ENCODE measurements at regions of chr1 and their contacts with region 1.

Region 1: GRCh38 chr1:30801771-30802198 is 44.2 kb upstream of the LAPTM5 start:
- DNase-seq: peak; percentile 65 to 88 (median 80)
- ATAC-seq: peak; percentile 87
- H3K4me3 ChIP-seq: no peak overlapping the region
- H3K4me3 Mint-ChIP-seq: no peak overlapping the region
- H3K27ac ChIP-seq: no peak overlapping the region
- H3K27ac Mint-ChIP-seq: no peak overlapping the region
- H3K4me1 ChIP-seq: no peaks in the 10 kb centered on the region
- H3K4me1 Mint-ChIP-seq: peaks cover 6% of the 10 kb centered on the region
- H3K27me3 ChIP-seq: peaks cover 0 to 3% of the 10 kb centered on the region in 2 experiments
- H3K27me3 Mint-ChIP-seq: peaks cover 31% of the 10 kb centered on the region
- CTCF ChIP-seq: peak; percentile 90

Region 2: DNA sequence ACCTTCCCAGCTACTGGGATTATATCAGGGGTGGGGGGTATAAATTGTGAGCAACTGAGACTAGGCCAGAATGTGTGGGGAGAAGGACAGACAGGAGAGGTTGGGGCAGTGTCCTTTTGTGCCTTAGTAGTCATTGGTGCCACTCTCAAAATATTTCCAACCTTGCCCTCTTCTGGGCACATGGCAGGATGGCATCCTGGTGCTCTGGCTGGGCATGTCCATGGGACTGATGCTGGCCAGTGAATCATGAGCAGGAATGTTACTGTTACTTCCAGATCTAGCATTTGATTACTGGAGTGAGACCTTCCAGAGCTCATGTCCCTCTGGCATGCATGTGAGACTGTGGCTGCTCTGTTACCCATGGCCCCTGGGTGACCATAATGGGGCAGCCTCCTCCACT is 229.6 kb before region 1 on chr1:
- CTCF ChIA-PET with region 1: no interaction called
- POLR2A ChIA-PET with region 1: no interaction called
- intact Hi-C with region 1: no loop called
- DNase-seq: no peak
- ATAC-seq: no peak
- H3K4me3 ChIP-seq: no peak overlapping the region
- H3K4me3 Mint-ChIP-seq: no peak overlapping the region
- H3K27ac ChIP-seq: no peak overlapping the region
- H3K27ac Mint-ChIP-seq: no peak overlapping the region
- H3K4me1 ChIP-seq: no peaks in the 10 kb centered on the region
- H3K4me1 Mint-ChIP-seq: no peaks in the 10 kb centered on the region
- H3K27me3 ChIP-seq: no peaks in the 10 kb centered on the region
- H3K27me3 Mint-ChIP-seq: peaks cover 32% of the 10 kb centered on the region
- CTCF ChIP-seq: no peak

Region 3: GRCh38 chr1:30779294-30780071 is 22.3 kb before region 1 on chr1:
- CTCF ChIA-PET with region 1: interaction called, 33 read pairs
- POLR2A ChIA-PET with region 1: no interaction called
- intact Hi-C with region 1: no loop called
- DNase-seq: peak; percentile 84 to 99 (median 90)
- ATAC-seq: peak; percentile 89
- H3K4me3 ChIP-seq: peak overlapping the region in 1 of 2 experiments; percentile 8
- H3K4me3 Mint-ChIP-seq: no peak overlapping the region
- H3K27ac ChIP-seq: no peak overlapping the region
- H3K27ac Mint-ChIP-seq: no peak overlapping the region
- H3K4me1 ChIP-seq: peaks cover 16% of the 10 kb centered on the region
- H3K4me1 Mint-ChIP-seq: peaks cover 17% of the 10 kb centered on the region
- H3K27me3 ChIP-seq: no peaks in the 10 kb centered on the region
- H3K27me3 Mint-ChIP-seq: no peaks in the 10 kb centered on the region
- CTCF ChIP-seq: peak; percentile 83

Region 4: GRCh38 chr1:30847358-30847972 is 45.7 kb after region 1 on chr1:
- CTCF ChIA-PET with region 1: no interaction called
- POLR2A ChIA-PET with region 1: no interaction called
- intact Hi-C with region 1: no loop called
- DNase-seq: no peak
- ATAC-seq: no peak
- H3K4me3 ChIP-seq: no peak overlapping the region
- H3K4me3 Mint-ChIP-seq: no peak overlapping the region
- H3K27ac ChIP-seq: no peak overlapping the region
- H3K27ac Mint-ChIP-seq: no peak overlapping the region
- H3K4me1 ChIP-seq: no peaks in the 10 kb centered on the region
- H3K4me1 Mint-ChIP-seq: no peaks in the 10 kb centered on the region
- H3K27me3 ChIP-seq: peaks cover 0 to 3% of the 10 kb centered on the region in 2 experiments
- H3K27me3 Mint-ChIP-seq: peaks cover 61% of the 10 kb centered on the region
- CTCF ChIP-seq: no peak

Region 5: DNA sequence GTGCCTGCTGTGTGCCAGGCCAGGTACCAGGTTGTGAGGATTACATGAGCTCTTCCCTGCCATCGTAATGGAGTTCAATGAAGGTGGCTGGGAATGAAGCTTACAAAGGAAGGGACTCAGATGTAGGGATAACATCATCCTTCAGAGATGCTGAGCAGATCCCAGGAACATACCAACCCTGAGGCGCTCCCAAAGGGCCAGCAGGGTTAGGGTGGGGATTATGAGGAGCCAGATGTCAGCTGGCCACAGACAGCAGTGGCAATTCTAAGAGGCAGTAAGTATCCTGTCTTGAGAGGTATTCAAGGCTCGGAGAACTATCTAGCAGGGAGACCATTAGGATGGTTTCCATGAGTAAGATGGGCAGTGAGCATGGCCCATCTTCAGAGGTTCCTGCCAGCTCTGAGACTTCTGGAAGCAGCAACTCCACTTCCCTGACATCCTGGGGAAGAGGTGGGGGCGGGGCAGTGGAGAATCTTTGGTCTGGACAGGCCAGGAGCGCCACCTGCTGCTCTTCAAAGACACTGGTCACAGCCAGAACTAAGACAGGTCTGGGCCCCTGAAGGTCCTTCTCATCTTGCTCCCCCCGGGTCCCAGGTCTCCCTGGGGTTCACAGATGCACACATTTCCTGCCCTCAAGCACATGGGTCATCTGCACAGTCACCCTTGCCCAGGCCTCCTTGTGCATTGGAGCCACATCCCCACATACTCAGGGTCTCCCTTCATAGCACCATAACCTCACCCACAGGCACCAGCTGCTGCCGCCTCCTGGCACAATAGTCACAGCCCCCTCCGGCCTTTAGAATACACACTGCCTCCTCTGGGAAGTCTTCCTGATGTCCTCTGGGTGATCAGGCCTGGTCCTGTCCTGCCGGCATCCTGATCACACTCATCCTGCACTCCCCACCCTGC is 109.5 kb after region 1 on chr1:
- CTCF ChIA-PET with region 1: interaction called, 32 read pairs
- POLR2A ChIA-PET with region 1: no interaction called
- intact Hi-C with region 1: loop called (anchors 1 to 5 kb)
- DNase-seq: peak in 7 of 9 experiments; percentile 29 to 67 (median 47)
- ATAC-seq: no peak
- H3K4me3 ChIP-seq: no peak overlapping the region
- H3K4me3 Mint-ChIP-seq: no peak overlapping the region
- H3K27ac ChIP-seq: no peak overlapping the region
- H3K27ac Mint-ChIP-seq: no peak overlapping the region
- H3K4me1 ChIP-seq: peaks cover 16% of the 10 kb centered on the region
- H3K4me1 Mint-ChIP-seq: peaks cover 17% of the 10 kb centered on the region
- H3K27me3 ChIP-seq: peaks cover 14 to 20% of the 10 kb centered on the region in 2 experiments
- H3K27me3 Mint-ChIP-seq: peaks cover 23% of the 10 kb centered on the region
- CTCF ChIP-seq: no peak

Region 6: GRCh38 chr1:30929135-30929889 is 127.5 kb after region 1 on chr1:
- CTCF ChIA-PET with region 1: interaction called, 46 read pairs
- POLR2A ChIA-PET with region 1: no interaction called
- intact Hi-C with region 1: loop called in 1 of 2 experiments (anchors 1 kb)
- DNase-seq: peak in 7 of 9 experiments; percentile 20 to 65 (median 51)
- ATAC-seq: peak; percentile 76
- H3K4me3 ChIP-seq: no peak overlapping the region
- H3K4me3 Mint-ChIP-seq: no peak overlapping the region
- H3K27ac ChIP-seq: peak overlapping the region in 1 of 2 experiments; percentile 55
- H3K27ac Mint-ChIP-seq: peak overlapping the region; percentile 10
- H3K4me1 ChIP-seq: peaks cover 3% of the 10 kb centered on the region
- H3K4me1 Mint-ChIP-seq: no peaks in the 10 kb centered on the region
- H3K27me3 ChIP-seq: no peaks in the 10 kb centered on the region
- H3K27me3 Mint-ChIP-seq: no peaks in the 10 kb centered on the region
- CTCF ChIP-seq: peak; percentile 76

Region 7: DNA sequence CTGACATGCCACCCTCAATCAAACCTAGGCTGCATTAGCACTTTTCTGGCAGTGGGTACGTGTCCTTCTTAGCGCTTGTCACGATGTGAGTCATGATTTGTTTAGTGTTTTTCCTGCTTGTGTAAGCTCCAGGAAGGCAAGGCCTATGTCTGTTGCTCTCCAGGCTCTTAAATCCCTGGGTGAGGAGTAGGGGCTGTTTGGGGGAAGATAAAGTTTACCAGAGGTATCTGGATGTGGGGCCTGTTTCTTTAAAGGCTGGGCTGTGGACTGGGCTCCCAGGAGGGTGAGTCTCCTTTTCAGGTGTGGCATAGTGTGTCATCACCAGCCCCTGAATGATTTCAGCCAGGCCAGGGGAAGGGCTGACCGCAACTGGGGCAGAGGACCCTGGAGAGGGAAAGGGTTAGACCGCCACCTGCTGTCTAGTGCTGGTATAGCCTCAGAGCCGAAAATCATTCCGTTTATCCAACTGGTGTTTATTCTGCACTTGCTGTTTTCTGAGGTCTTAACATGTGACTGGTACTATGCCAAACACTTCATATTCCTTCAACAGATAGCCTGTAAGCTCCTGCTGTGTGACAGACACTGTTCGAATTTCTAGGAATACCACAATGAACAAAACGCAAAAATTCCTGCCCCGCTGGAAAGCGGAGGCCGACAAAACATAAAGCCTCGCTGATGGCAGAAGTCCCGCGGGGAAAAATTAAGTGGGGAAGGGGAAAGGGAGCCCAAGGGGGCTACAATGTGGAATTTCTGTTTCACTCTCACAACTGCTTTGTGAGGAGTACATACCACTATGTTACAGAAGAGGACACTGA is 620.9 kb after region 1 on chr1:
- CTCF ChIA-PET with region 1: interaction called, 8 read pairs
- POLR2A ChIA-PET with region 1: no interaction called
- intact Hi-C with region 1: loop called (anchors 2 kb)
- DNase-seq: peak; percentile 27 to 78 (median 67)
- ATAC-seq: peak; percentile 77
- H3K4me3 ChIP-seq: no peak overlapping the region
- H3K4me3 Mint-ChIP-seq: no peak overlapping the region
- H3K27ac ChIP-seq: no peak overlapping the region
- H3K27ac Mint-ChIP-seq: no peak overlapping the region
- H3K4me1 ChIP-seq: no peaks in the 10 kb centered on the region
- H3K4me1 Mint-ChIP-seq: no peaks in the 10 kb centered on the region
- H3K27me3 ChIP-seq: no peaks in the 10 kb centered on the region
- H3K27me3 Mint-ChIP-seq: peaks cover 24% of the 10 kb centered on the region
- CTCF ChIP-seq: peak; percentile 86